Activated CD8-positive, alpha-beta T cell treated with anti-CD3 and anti-CD28 coated beads for 36 hours (primary cell): ENCODE measurements at regions of chr2 and their contacts with region 1.

Region 1: GRCh38 chr2:158006961-158007719 is 94.5 kb upstream of the UPP2 start:
- DNase-seq: peak; percentile 31
- ATAC-seq: peak; percentile 65
- H3K4me3 Mint-ChIP-seq: no peak overlapping the region
- H3K27ac Mint-ChIP-seq: no peak overlapping the region
- H3K4me1 Mint-ChIP-seq: peaks cover 4% of the 10 kb centered on the region
- H3K27me3 Mint-ChIP-seq: peaks cover 2% of the 10 kb centered on the region
- CTCF ChIP-seq: no peak

Region 2: GRCh38 chr2:157509744-157510143 is 497.4 kb before region 1 on chr2:
- CTCF ChIA-PET with region 1: interaction called, 10 read pairs
- POLR2A ChIA-PET with region 1: no interaction called
- intact Hi-C with region 1: no loop called
- DNase-seq: no peak
- ATAC-seq: no peak
- H3K4me3 Mint-ChIP-seq: no peak overlapping the region
- H3K27ac Mint-ChIP-seq: no peak overlapping the region
- H3K4me1 Mint-ChIP-seq: peaks cover 4% of the 10 kb centered on the region
- H3K27me3 Mint-ChIP-seq: peaks cover 17% of the 10 kb centered on the region
- CTCF ChIP-seq: no peak

Region 3: GRCh38 chr2:157777427-157777826 is 229.7 kb before region 1 on chr2:
- CTCF ChIA-PET with region 1: interaction called, 44 read pairs
- POLR2A ChIA-PET with region 1: no interaction called
- intact Hi-C with region 1: loop called (anchors 2 kb)
- DNase-seq: peak; percentile 75
- ATAC-seq: no peak
- H3K4me3 Mint-ChIP-seq: no peak overlapping the region
- H3K27ac Mint-ChIP-seq: no peak overlapping the region
- H3K4me1 Mint-ChIP-seq: peaks cover 13% of the 10 kb centered on the region
- H3K27me3 Mint-ChIP-seq: no peaks in the 10 kb centered on the region
- CTCF ChIP-seq: peak; percentile 83

Region 4: DNA sequence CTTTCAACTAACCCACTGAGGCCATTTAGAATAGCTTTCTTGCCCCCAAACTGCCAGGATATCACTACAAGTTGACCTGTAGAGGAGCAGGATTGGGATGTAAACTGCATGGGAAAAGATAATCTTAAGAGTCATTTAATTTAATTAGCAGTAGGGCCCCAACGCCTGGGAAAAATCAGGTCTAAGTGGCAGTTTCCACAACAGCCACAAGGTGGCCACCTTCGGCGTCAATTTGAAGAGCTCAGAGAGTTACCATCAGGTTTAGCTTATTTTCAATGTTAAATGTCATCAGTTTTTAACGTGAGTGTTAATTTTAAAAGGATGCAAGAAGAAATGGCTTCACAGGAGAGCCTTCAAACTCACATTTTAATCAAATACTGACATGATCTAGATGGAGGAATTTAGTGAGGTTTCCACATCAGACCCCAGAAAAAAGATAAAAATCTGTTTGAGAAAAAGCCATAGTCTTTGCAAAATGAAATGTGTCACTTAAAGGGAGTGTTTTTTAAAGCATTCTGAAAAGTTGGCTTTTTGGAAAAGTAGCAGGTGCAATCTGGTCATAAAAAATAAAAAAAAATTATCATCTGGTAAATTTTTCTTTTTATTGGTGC is 17.3 kb after region 1 on chr2:
- CTCF ChIA-PET with region 1: interaction called, 37 read pairs
- POLR2A ChIA-PET with region 1: no interaction called
- intact Hi-C with region 1: no loop called
- DNase-seq: peak; percentile 70
- ATAC-seq: peak; percentile 58
- H3K4me3 Mint-ChIP-seq: no peak overlapping the region
- H3K27ac Mint-ChIP-seq: no peak overlapping the region
- H3K4me1 Mint-ChIP-seq: no peaks in the 10 kb centered on the region
- H3K27me3 Mint-ChIP-seq: no peaks in the 10 kb centered on the region
- CTCF ChIP-seq: peak; percentile 82

Region 5: GRCh38 chr2:158099716-158100115 is 92.6 kb after region 1 on chr2:
- CTCF ChIA-PET with region 1: no interaction called
- POLR2A ChIA-PET with region 1: no interaction called
- intact Hi-C with region 1: no loop called
- DNase-seq: no peak
- ATAC-seq: no peak
- H3K4me3 Mint-ChIP-seq: no peak overlapping the region
- H3K27ac Mint-ChIP-seq: no peak overlapping the region
- H3K4me1 Mint-ChIP-seq: no peaks in the 10 kb centered on the region
- H3K27me3 Mint-ChIP-seq: no peaks in the 10 kb centered on the region
- CTCF ChIP-seq: no peak